ENCODE measurements at regions of chr17 and their contacts with region 1.

Region 1: DNA sequence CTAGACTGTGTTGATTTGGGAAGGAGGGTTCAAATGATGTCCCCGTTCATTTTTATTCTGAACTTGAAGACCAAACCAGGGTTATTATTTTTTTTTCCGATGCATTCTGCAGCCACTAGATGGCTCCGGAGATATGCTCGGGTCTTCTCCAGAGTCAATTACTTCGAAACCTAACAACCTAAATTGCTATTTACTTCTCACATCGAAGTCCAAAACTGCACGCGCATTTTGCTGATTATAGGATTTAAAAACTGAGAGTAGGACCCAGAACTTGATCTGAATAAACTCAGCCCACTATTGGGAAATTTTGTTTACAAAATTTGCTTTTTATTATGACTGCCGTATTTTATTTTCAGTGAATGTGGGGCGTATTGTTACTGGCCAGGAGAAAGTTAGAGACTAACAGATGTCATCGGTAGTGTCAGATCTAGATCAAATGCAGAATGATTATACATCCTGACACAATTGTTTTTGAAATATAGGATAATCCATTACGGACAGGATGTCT is 263.8 kb downstream of the HS3ST3A1 start:
- DNase-seq: no peak
- ATAC-seq: no peak
- H3K4me3 ChIP-seq: peak overlapping the region; percentile 19 to 57 (median 32)
- H3K27ac ChIP-seq: no peak overlapping the region
- H3K4me1 ChIP-seq: no peaks in the 10 kb centered on the region
- H3K27me3 ChIP-seq: peaks cover 0 to 8% (median 0%) of the 10 kb centered on the region in 3 donors
- CTCF ChIP-seq: peak in 4 of 5 experiments; percentile 9 to 58 (median 42)
- POLR2A ChIP-seq: no peak

Region 2: GRCh38 chr17:14300575-14301278 is 962.8 kb after region 1 on chr17 and contains the start of gene HS3ST3B1:
- in situ Hi-C with region 1: loop called in 1 of 4 experiments (anchors 25 kb)
- intact Hi-C with region 1: loop called (anchors 5 kb)
- DNase-seq: peak; percentile 96 to 98
- ATAC-seq: peak; percentile 90 to 95
- H3K4me3 ChIP-seq: peak within 1 kb of the TSS; percentile 57 to 74 (median 70)
- H3K27ac ChIP-seq: peak within 1 kb of the TSS; percentile 64 to 80 (median 70)
- H3K4me1 ChIP-seq: peaks cover 35 to 44% of the 10 kb centered on the region in 2 donors
- H3K27me3 ChIP-seq: peaks cover 60 to 89% (median 85%) of the 10 kb centered on the region in 3 donors
- CTCF ChIP-seq: peak in 1 of 5 experiments; percentile 14
- POLR2A ChIP-seq: peak; percentile 77 to 86
- total RNA-seq, gene HS3ST3B1: 0.10 to 4.0 (median 0.82) TPM

Region 3: GRCh38 chr17:14926526-14927122 is 1588.7 kb after region 1 on chr17:
- in situ Hi-C with region 1: loop called in 2 of 4 experiments (anchors 10 to 25 kb)
- intact Hi-C with region 1: no loop called
- DNase-seq: peak in 1 of 2 donors; percentile 6
- ATAC-seq: no peak
- H3K4me3 ChIP-seq: no peak overlapping the region
- H3K27ac ChIP-seq: no peak overlapping the region
- H3K4me1 ChIP-seq: no peaks in the 10 kb centered on the region
- H3K27me3 ChIP-seq: no peaks in the 10 kb centered on the region
- CTCF ChIP-seq: peak; percentile 38 to 66 (median 50)
- POLR2A ChIP-seq: no peak